ENCODE measurements at regions of chr3 and their contacts with region 1.

Region 1: GRCh38 chr3:42502429-42503250 is at the start of gene VIPR1:
- DNase-seq: peak; percentile 94
- H3K4me3 Mint-ChIP-seq: peak within 1 kb of the TSS; percentile 91
- H3K27ac Mint-ChIP-seq: peak within 1 kb of the TSS; percentile 50
- H3K4me1 Mint-ChIP-seq: peaks cover 44% of the 10 kb centered on the region
- H3K27me3 Mint-ChIP-seq: peaks cover 27% of the 10 kb centered on the region
- total RNA-seq, gene VIPR1: 5.9 to 6.5 TPM

Region 2: DNA sequence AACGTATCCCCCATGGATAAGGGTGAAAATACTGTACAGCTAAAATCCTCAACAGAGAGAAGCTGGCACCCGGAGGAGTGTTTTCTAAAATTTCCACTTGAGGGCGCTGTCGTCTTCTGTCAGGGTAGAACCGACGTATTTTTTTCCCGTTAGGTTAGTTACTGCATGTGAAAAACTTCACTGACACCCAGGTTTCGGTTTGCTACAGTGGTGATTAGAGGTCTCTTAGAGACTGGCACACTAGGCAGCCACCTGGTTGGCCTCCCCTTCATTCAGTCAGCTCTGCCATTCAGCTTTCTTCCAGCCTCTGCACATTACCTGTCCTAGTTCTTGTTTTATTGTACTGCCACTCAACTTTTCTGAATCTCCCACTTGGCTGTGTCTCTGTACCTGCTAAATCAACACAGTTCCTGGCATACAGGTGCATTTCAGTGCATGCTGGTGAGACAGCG is 255.0 kb before region 1 on chr3:
- CTCF ChIA-PET with region 1: interaction called, 17 read pairs
- POLR2A ChIA-PET with region 1: no interaction called
- intact Hi-C with region 1: no loop called
- DNase-seq: peak; percentile 73
- H3K4me3 Mint-ChIP-seq: no peak overlapping the region
- H3K27ac Mint-ChIP-seq: no peak overlapping the region
- H3K4me1 Mint-ChIP-seq: peaks cover 7% of the 10 kb centered on the region
- H3K27me3 Mint-ChIP-seq: peaks cover 9% of the 10 kb centered on the region

Region 3: DNA sequence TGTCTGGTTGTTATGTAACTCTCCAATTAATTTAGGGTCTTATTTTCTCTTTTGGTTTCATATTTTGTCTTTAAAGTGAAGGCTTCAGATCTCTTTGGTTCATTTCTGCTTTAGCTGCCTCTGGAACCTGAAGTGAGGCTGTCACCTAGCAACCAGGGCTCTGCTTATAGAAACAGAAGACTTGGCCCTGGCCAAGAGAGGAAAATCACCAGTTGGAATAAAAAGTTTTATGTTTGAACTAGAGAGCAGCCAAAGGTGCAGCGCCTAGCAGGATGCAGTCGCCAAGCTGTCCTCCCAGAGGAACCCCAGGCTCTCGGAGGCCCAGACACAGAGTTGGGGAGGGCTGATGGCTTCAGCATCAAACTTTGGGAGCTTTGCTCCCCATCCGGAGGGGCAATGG is 133.3 kb before region 1 on chr3:
- CTCF ChIA-PET with region 1: no interaction called
- POLR2A ChIA-PET with region 1: no interaction called
- intact Hi-C with region 1: no loop called
- DNase-seq: no peak
- H3K4me3 Mint-ChIP-seq: no peak overlapping the region
- H3K27ac Mint-ChIP-seq: no peak overlapping the region
- H3K4me1 Mint-ChIP-seq: no peaks in the 10 kb centered on the region
- H3K27me3 Mint-ChIP-seq: peaks cover 4% of the 10 kb centered on the region

Region 4: GRCh38 chr3:42434777-42435380 is 67.8 kb before region 1 on chr3:
- CTCF ChIA-PET with region 1: no interaction called
- POLR2A ChIA-PET with region 1: no interaction called
- intact Hi-C with region 1: no loop called
- DNase-seq: no peak
- H3K4me3 Mint-ChIP-seq: no peak overlapping the region
- H3K27ac Mint-ChIP-seq: no peak overlapping the region
- H3K4me1 Mint-ChIP-seq: no peaks in the 10 kb centered on the region
- H3K27me3 Mint-ChIP-seq: peaks cover 15% of the 10 kb centered on the region

Region 5: GRCh38 chr3:42526616-42527367 is 24.2 kb after region 1 on chr3:
- CTCF ChIA-PET with region 1: interaction called, 14 read pairs
- POLR2A ChIA-PET with region 1: interaction called, 5 read pairs
- intact Hi-C with region 1: no loop called
- DNase-seq: peak; percentile 73
- H3K4me3 Mint-ChIP-seq: no peak overlapping the region
- H3K27ac Mint-ChIP-seq: peak overlapping the region; percentile 71
- H3K4me1 Mint-ChIP-seq: peaks cover 56% of the 10 kb centered on the region
- H3K27me3 Mint-ChIP-seq: no peaks in the 10 kb centered on the region

Region 6: DNA sequence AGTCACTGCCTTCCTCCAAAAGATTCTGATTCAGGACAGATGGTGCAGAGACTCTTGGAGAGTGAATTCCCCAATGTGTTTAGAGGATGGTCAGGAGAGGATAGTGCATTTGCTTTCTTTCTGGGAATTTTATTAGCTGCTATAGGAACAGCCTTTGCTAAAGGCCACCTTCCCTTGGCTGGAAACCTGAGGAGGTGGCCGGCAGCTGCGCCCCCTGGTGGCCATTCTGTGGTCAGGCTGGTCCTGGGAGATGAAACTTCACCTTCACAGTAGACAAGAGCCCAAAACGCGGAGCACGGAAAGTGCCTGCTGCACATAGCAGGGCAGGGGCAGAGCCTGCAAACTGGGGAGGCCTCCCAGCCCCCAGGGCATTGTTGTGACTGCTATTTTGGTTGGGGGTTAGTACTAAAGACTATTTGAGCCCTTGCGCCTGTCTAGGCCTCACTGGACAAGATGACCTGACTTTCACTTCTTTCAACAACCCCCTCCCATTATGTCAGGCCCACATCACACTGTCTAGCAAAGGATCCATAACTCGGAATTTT is 44.8 kb after region 1 on chr3:
- CTCF ChIA-PET with region 1: interaction called, 63 read pairs
- POLR2A ChIA-PET with region 1: no interaction called
- intact Hi-C with region 1: no loop called
- DNase-seq: peak; percentile 74
- H3K4me3 Mint-ChIP-seq: no peak overlapping the region
- H3K27ac Mint-ChIP-seq: no peak overlapping the region
- H3K4me1 Mint-ChIP-seq: peaks cover 5% of the 10 kb centered on the region
- H3K27me3 Mint-ChIP-seq: no peaks in the 10 kb centered on the region

Region 7: GRCh38 chr3:42600111-42600988 is 97.7 kb after region 1 on chr3 and contains the start of gene NKTR:
- CTCF ChIA-PET with region 1: interaction called, 4 read pairs
- POLR2A ChIA-PET with region 1: no interaction called
- intact Hi-C with region 1: loop called (anchors 5 kb)
- DNase-seq: peak; percentile 99
- H3K4me3 Mint-ChIP-seq: peak within 1 kb of the TSS; percentile 98
- H3K27ac Mint-ChIP-seq: peak within 1 kb of the TSS; percentile 98
- H3K4me1 Mint-ChIP-seq: peaks cover 33% of the 10 kb centered on the region
- H3K27me3 Mint-ChIP-seq: no peaks in the 10 kb centered on the region
- total RNA-seq, gene NKTR: 65.9 to 73.9 TPM

Region 8: GRCh38 chr3:42749753-42750231 is 247.2 kb after region 1 on chr3:
- CTCF ChIA-PET with region 1: interaction called, 10 read pairs
- POLR2A ChIA-PET with region 1: no interaction called
- intact Hi-C with region 1: no loop called
- DNase-seq: peak; percentile 17
- H3K4me3 Mint-ChIP-seq: no peak overlapping the region
- H3K27ac Mint-ChIP-seq: no peak overlapping the region
- H3K4me1 Mint-ChIP-seq: peaks cover 25% of the 10 kb centered on the region
- H3K27me3 Mint-ChIP-seq: no peaks in the 10 kb centered on the region

Measured in activated CD4-positive, alpha-beta memory T cell treated with anti-CD3 and anti-CD28 coated beads for 36 hours (primary cell).